Naive thymus-derived CD8-positive, alpha-beta T cell (primary cell): ENCODE measurements at regions of chr16 and their contacts with region 1.

Region 1: DNA sequence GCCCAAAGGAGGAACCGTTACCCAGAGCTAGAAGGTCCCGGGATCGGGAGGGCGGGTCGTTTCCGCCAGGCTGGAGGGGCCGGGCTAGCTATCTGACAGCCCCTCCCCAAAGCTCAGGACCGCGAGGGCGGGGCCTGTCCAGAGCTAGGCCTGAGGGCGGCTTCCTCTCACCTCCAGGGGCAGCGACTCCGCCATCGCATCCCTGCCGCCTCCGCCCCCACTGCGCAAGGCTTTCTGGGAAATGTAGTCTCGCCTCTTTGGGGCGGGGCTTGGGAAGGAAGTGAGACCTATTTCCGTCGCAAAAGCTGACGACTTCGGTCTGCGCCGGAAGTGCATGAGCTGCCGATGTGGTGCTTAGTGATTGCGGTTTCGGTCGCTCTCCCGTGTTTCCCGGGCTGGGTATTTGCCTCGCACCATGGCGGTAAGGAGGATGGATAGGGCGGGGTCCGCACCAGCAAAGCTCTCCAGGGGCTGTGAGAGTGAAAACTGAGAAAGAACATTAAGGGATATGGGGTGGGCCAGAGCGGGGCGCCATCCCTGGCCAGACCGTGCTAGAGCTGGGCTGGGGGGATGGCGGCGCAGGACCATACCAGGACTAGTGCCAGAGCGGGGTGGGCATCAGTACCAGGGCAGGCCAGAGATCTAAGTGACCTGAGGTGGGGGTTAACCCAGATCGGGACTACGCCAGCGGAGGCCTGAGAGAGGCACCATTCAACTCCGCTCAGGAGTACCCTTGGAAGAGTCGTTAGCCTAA is at the start of gene TMEM208:
- DNase-seq: peak; percentile 91 to 99 (median 98)
- ATAC-seq: peak; percentile 94 to 95
- H3K4me3 Mint-ChIP-seq: peak within 1 kb of the TSS; percentile 97 to 100 (median 99)
- H3K27ac Mint-ChIP-seq: peak within 1 kb of the TSS; percentile 93 to 99 (median 99)
- H3K4me1 Mint-ChIP-seq: peaks cover 25 to 53% (median 48%) of the 10 kb centered on the region in 4 donors
- H3K27me3 Mint-ChIP-seq: no peaks in the 10 kb centered on the region
- polyA plus RNA-seq, gene TMEM208: 65.3 to 88.4 (median 76.4) TPM

Region 2: GRCh38 chr16:66740010-66740409 is 487.0 kb before region 1 on chr16:
- POLR2A ChIA-PET with region 1: no interaction called
- DNase-seq: peak in 4 of 10 donors; percentile 20 to 34 (median 27)
- ATAC-seq: peak; percentile 56
- H3K4me3 Mint-ChIP-seq: no peak overlapping the region
- H3K27ac Mint-ChIP-seq: peak overlapping the region in 4 of 10 donors; percentile 12 to 63 (median 54)
- H3K4me1 Mint-ChIP-seq: peaks cover 8 to 35% (median 19%) of the 10 kb centered on the region in 4 donors
- H3K27me3 Mint-ChIP-seq: no peaks in the 10 kb centered on the region

Region 3: GRCh38 chr16:67173808-67174705 is 52.9 kb before region 1 on chr16:
- POLR2A ChIA-PET with region 1: no interaction called
- DNase-seq: peak in 9 of 10 donors; percentile 41 to 76 (median 50)
- ATAC-seq: peak; percentile 79 to 87
- H3K4me3 Mint-ChIP-seq: peak overlapping the region; percentile 72 to 97 (median 88)
- H3K27ac Mint-ChIP-seq: peak overlapping the region in 3 of 10 donors; percentile 53 to 62 (median 60)
- H3K4me1 Mint-ChIP-seq: peaks cover 21 to 50% (median 40%) of the 10 kb centered on the region in 4 donors
- H3K27me3 Mint-ChIP-seq: peaks cover 38 to 86% (median 49%) of the 10 kb centered on the region in 5 donors

Region 4: DNA sequence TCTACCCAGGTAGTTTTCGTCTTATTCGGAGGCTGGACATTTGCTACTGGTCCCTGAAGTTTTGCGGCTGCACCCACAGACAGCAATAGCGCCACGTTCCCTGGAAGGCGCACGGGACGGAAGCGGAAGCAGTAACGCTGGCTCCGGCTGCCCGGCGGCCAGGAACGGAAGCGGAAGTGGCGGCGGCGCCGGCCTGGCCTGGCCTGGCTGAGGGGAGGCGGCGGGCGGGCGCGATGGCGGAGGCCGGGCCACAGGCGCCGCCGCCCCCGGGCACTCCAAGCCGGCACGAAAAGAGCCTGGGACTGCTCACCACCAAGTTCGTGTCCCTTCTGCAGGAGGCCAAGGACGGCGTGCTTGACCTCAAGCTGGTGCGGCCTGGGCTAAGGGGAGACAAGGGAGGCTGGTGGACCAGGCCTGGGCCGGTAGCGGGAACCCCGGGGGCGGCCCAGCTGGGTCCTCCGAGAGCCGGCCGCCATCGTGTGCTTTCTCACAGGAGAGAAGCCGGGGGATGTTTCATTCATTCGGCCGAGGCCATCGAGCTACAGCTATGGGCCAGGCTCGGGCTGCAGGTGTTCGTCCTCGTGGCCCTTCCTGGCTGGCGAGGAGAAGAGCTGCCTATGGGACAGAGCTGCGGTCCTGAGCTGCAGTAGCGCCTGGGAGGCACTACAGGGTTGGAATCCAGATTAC is 34.8 kb before region 1 on chr16 and contains the start of gene E2F4:
- POLR2A ChIA-PET with region 1: interaction called, 17 read pairs
- DNase-seq: peak; percentile 72 to 87 (median 81)
- ATAC-seq: peak; percentile 96 to 97
- H3K4me3 Mint-ChIP-seq: peak within 1 kb of the TSS; percentile 81 to 97 (median 90)
- H3K27ac Mint-ChIP-seq: peak within 1 kb of the TSS; percentile 81 to 96 (median 92)
- H3K4me1 Mint-ChIP-seq: peaks cover 20 to 56% (median 46%) of the 10 kb centered on the region in 4 donors
- H3K27me3 Mint-ChIP-seq: peaks cover 0 to 1% (median 0%) of the 10 kb centered on the region in 5 donors
- polyA plus RNA-seq, gene E2F4: 40.7 to 67.8 (median 63.4) TPM

Region 5: GRCh38 chr16:67207857-67208519 is 19.0 kb before region 1 on chr16:
- POLR2A ChIA-PET with region 1: interaction called, 10 read pairs
- DNase-seq: no peak
- ATAC-seq: no peak
- H3K4me3 Mint-ChIP-seq: no peak overlapping the region
- H3K27ac Mint-ChIP-seq: no peak overlapping the region
- H3K4me1 Mint-ChIP-seq: peaks cover 0 to 3% (median under 1%) of the 10 kb centered on the region in 4 donors
- H3K27me3 Mint-ChIP-seq: no peaks in the 10 kb centered on the region

Region 6: GRCh38 chr16:67246934-67247697 is 20.1 kb after region 1 on chr16 and contains the start of gene FHOD1:
- POLR2A ChIA-PET with region 1: interaction called, 99 read pairs
- DNase-seq: peak; percentile 87 to 96 (median 90)
- ATAC-seq: peak; percentile 75 to 77
- H3K4me3 Mint-ChIP-seq: peak within 1 kb of the TSS; percentile 87 to 98 (median 90)
- H3K27ac Mint-ChIP-seq: peak within 1 kb of the TSS; percentile 77 to 94 (median 87)
- H3K4me1 Mint-ChIP-seq: peaks cover 31 to 56% (median 52%) of the 10 kb centered on the region in 4 donors
- H3K27me3 Mint-ChIP-seq: peaks cover 0 to 11% (median 0%) of the 10 kb centered on the region in 5 donors
- polyA plus RNA-seq, gene FHOD1: 1.6 to 3.0 (median 2.3) TPM